ENCODE measurements at regions of chr3 and their contacts with region 1.

Region 1: GRCh38 chr3:138774529-138775253 is 60.0 kb downstream of the PIK3CB start:
- DNase-seq: no peak
- H3K4me3 ChIP-seq: no peak overlapping the region
- H3K27ac ChIP-seq: peak overlapping the region; percentile 53 to 64 (median 60)
- H3K4me1 ChIP-seq: peaks cover 21 to 30% (median 27%) of the 10 kb centered on the region in 4 donors
- H3K27me3 ChIP-seq: no peaks in the 10 kb centered on the region
- CTCF ChIP-seq: no peak
- EP300 ChIP-seq: no peak
- POLR2A ChIP-seq: no peak

Region 2: GRCh38 chr3:138915503-138916498 is 141.1 kb after region 1 on chr3:
- intact Hi-C with region 1: loop called (anchors 10 kb)
- DNase-seq: peak; percentile 97
- H3K4me3 ChIP-seq: peak overlapping the region; percentile 61 to 88 (median 82)
- H3K27ac ChIP-seq: peak overlapping the region; percentile 87 to 96 (median 94)
- H3K4me1 ChIP-seq: peaks cover 0 to 20% (median 15%) of the 10 kb centered on the region in 4 donors
- H3K27me3 ChIP-seq: no peaks in the 10 kb centered on the region
- CTCF ChIP-seq: peak; percentile 84 to 90 (median 88)
- EP300 ChIP-seq: no peak
- POLR2A ChIP-seq: no peak